Activated CD8-positive, alpha-beta T cell treated with anti-CD3 and anti-CD28 coated beads for 36 hours (primary cell): ENCODE measurements at regions of chr7 and their contacts with region 1.

Region 1: DNA sequence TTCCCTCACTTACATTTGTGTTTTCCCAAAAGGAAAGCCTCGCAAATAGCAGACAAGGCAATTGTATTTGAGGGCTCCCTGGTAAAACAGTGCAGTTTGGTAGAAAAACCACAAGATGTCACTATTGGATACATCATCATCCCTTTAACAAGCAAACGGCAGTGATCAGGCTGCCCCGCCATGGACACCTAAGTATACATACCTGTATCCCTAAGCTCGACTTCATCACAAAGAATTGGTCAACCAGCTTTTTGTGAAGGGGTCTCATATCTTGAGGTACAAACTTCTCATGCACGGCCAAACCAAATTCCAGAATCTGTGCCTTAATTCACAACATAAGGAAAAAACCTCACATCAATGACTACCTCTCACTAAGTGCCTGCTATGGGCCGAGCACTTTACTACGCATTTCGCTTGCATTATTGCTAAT is 179.5 kb upstream of the IMMP2L start:
- DNase-seq: peak; percentile 50
- ATAC-seq: peak; percentile 91
- H3K4me3 Mint-ChIP-seq: no peak overlapping the region
- H3K27ac Mint-ChIP-seq: no peak overlapping the region
- H3K4me1 Mint-ChIP-seq: no peaks in the 10 kb centered on the region
- H3K27me3 Mint-ChIP-seq: no peaks in the 10 kb centered on the region
- CTCF ChIP-seq: peak; percentile 71

Region 2: GRCh38 chr7:111672891-111673290 is 68.9 kb before region 1 on chr7:
- CTCF ChIA-PET with region 1: no interaction called
- POLR2A ChIA-PET with region 1: no interaction called
- intact Hi-C with region 1: no loop called
- DNase-seq: no peak
- ATAC-seq: no peak
- H3K4me3 Mint-ChIP-seq: no peak overlapping the region
- H3K27ac Mint-ChIP-seq: no peak overlapping the region
- H3K4me1 Mint-ChIP-seq: no peaks in the 10 kb centered on the region
- H3K27me3 Mint-ChIP-seq: peaks cover 15% of the 10 kb centered on the region
- CTCF ChIP-seq: no peak

Region 3: DNA sequence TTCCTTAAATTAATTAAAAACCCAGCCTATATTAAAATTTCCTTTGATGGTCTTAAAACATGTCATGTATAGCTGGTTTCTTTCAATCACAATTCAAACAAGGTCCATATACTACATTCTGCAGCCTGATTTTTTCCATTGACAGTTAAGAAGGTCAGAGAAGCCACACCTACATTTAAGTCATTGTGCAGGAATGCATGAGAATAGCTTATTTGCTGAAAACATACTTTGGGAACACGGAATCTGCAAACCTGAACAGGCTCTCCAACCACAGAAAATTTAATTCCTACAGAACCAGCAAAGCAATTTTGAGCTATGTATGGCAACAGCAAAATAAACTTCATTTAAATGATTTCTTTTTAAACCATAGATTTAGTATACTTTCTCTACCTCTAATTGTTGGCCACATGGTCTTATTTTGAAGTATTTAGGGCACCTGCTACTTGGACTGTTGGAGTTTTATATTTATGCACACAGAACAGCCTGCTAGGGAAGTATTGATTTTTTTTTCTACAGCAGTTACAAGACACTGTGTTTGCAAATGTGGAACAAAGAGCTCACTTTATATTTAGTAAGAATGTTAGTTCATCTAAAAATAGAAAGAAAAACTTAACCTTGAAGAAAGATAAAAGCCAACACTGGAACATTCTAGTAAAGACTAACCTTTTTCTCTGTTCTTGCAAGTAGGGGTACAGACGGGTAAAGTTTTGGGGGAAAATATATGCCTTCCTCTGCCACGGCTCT is 61.4 kb after region 1 on chr7:
- CTCF ChIA-PET with region 1: no interaction called
- POLR2A ChIA-PET with region 1: no interaction called
- intact Hi-C with region 1: no loop called
- DNase-seq: no peak
- ATAC-seq: no peak
- H3K4me3 Mint-ChIP-seq: no peak overlapping the region
- H3K27ac Mint-ChIP-seq: no peak overlapping the region
- H3K4me1 Mint-ChIP-seq: no peaks in the 10 kb centered on the region
- H3K27me3 Mint-ChIP-seq: peaks cover 2% of the 10 kb centered on the region
- CTCF ChIP-seq: no peak

Region 4: DNA sequence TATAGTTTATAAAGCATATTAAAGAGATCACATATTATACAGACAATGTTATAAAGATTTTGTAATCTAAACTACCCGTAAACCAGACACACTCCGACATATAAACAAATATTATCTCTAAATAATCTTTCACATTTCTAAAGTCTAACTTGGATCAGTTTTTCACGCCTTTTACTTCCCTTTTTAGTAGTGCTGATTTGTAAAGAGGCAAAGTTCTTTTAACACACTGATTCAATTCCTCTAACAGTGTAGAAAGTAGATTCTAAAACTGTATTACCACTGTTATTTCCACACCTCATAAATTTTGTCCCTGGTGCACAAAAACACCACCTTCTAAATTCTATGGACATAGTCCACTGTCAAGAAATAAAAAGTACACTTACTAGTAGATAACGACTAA is 233.5 kb after region 1 on chr7:
- CTCF ChIA-PET with region 1: no interaction called
- POLR2A ChIA-PET with region 1: no interaction called
- intact Hi-C with region 1: no loop called
- DNase-seq: no peak
- ATAC-seq: no peak
- H3K4me3 Mint-ChIP-seq: no peak overlapping the region
- H3K27ac Mint-ChIP-seq: no peak overlapping the region
- H3K4me1 Mint-ChIP-seq: no peaks in the 10 kb centered on the region
- H3K27me3 Mint-ChIP-seq: no peaks in the 10 kb centered on the region
- CTCF ChIP-seq: no peak

Region 5: DNA sequence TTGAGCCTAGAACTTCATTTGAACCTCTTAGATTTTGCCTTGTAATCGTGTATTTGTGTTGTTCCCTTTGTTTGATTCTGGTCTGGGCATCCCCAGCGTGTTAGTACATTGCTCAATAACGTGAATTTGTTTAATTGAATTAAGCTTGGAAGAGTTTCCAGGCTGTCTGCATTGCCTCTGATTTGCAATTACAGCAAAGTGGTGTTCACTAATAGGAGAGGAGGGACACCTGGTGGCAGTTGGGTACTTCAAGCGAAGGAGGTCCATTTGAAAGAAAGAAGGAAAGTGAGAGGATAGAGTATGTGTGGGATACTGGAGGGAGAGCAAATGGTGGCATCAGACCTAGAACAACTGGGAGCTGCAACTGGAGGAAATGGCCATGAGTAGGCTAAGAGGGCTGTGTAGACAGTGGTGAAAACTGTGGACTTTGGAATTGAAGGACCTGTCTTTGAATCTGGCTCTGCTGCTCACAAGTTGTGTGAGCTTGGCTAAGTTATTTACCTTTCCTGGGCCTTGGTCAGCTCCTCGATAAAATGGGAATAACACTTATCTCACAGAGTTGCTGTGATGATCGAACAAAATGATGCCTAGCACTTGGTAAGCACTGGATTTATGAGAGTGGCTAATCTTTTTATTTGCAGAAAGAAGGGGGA is 754.1 kb after region 1 on chr7:
- CTCF ChIA-PET with region 1: interaction called, 8 read pairs
- POLR2A ChIA-PET with region 1: no interaction called
- intact Hi-C with region 1: loop called (anchors 5 kb)
- DNase-seq: peak; percentile 57
- ATAC-seq: no peak
- H3K4me3 Mint-ChIP-seq: no peak overlapping the region
- H3K27ac Mint-ChIP-seq: no peak overlapping the region
- H3K4me1 Mint-ChIP-seq: no peaks in the 10 kb centered on the region
- H3K27me3 Mint-ChIP-seq: peaks cover 3% of the 10 kb centered on the region
- CTCF ChIP-seq: peak; percentile 38